Heart left ventricle (tissue), 16 donors: ENCODE measurements at regions of chr10 and their contacts with region 1.

Region 1: GRCh38 chr10:48656241-48656913 is 28.3 kb upstream of the WDFY4 start:
- DNase-seq: peak; percentile 91 to 97 (median 93)
- ATAC-seq: peak; percentile 61 to 93 (median 89)
- H3K4me3 ChIP-seq: peak overlapping the region; percentile 9 to 74 (median 62)
- H3K27ac ChIP-seq: peak overlapping the region in 7 of 12 donors; percentile 11 to 87 (median 73)
- H3K4me1 ChIP-seq: peaks cover 0 to 32% (median 12%) of the 10 kb centered on the region in 12 donors
- H3K27me3 ChIP-seq: no peaks in the 10 kb centered on the region
- CTCF ChIP-seq: peak; percentile 89 to 99 (median 98)
- POLR2A ChIP-seq: peak in 1 of 2 donors; percentile 8

Region 2: DNA sequence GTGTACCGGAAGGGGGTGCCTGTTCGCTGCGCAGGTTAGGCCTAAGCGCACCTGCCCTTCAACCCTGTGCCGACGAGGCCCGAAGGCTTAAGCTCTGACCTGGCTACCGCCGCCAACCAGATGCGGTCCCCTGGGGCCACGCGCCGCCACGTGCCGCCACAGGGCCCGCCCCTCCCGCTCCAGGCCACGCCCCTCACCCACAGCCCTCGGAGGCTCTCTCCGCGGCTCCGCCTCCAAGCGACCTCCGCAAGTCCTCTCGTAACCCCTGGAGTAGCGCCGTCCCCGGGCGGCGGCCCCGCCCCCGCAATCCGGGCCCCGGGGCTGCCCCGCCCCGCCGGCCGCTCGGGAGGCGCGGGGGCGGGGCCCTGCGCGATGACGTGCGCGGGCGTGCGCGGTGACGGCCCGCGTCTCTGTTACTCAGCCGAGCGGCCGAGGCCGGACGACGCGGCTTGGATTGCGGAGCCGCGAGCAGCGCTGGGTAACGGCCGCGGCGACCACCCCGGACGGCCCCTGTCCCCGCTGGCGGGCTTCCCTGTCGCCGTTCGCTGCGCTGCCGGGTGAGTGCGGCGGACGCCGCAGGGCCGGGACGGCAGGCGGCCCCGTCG is 350.0 kb before region 1 on chr10 and contains the start of gene MAPK8:
- intact Hi-C with region 1: loop called in 1 of 10 experiments (anchors 5 kb)
- DNase-seq: peak; percentile 93 to 97 (median 95)
- ATAC-seq: peak; percentile 93 to 97 (median 96)
- H3K4me3 ChIP-seq: peak within 1 kb of the TSS; percentile 74 to 97 (median 88)
- H3K27ac ChIP-seq: peak within 1 kb of the TSS; percentile 85 to 99 (median 97)
- H3K4me1 ChIP-seq: peaks cover 0 to 37% (median 21%) of the 10 kb centered on the region in 12 donors
- H3K27me3 ChIP-seq: no peaks in the 10 kb centered on the region
- CTCF ChIP-seq: no peak
- POLR2A ChIP-seq: peak; percentile 97 to 98
- total RNA-seq, gene MAPK8: 22.8 to 36.8 (median 31.8) TPM

Region 3: DNA sequence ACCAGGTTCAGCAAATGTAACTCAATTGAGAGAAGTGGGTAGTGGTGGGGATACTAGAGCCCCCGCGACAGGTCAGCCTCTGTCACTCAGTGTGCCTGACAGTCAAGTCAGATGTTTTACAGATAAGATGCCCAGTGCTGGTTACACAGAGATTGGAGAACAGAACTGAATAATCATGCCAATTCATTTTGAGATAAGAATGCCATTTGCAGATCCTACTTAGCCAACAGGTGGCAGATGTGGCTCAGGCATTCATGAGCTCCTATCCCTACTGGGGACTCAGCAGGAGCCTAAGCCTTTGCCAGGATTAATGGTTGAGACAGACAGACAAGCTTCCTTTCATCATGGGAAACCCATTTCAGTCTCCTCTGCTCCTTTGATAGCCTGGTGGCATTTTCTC is 212.1 kb before region 1 on chr10:
- intact Hi-C with region 1: loop called in 3 of 10 experiments (anchors 10 kb)
- DNase-seq: peak in 1 of 5 donors; percentile 32
- ATAC-seq: peak in 1 of 4 donors; percentile 31
- H3K4me3 ChIP-seq: no peak overlapping the region
- H3K27ac ChIP-seq: no peak overlapping the region
- H3K4me1 ChIP-seq: no peaks in the 10 kb centered on the region
- H3K27me3 ChIP-seq: no peaks in the 10 kb centered on the region
- CTCF ChIP-seq: peak in 9 of 12 donors; percentile 7 to 39 (median 15)
- POLR2A ChIP-seq: no peak

Region 4: GRCh38 chr10:48608279-48608681 is 48.1 kb before region 1 on chr10:
- intact Hi-C with region 1: loop called in 8 of 10 experiments (anchors 1 to 5 kb)
- DNase-seq: no peak
- ATAC-seq: peak in 3 of 4 donors; percentile 34 to 46 (median 44)
- H3K4me3 ChIP-seq: no peak overlapping the region
- H3K27ac ChIP-seq: peak overlapping the region in 1 of 12 donors; percentile 85
- H3K4me1 ChIP-seq: peaks cover 0 to 69% (median 11%) of the 10 kb centered on the region in 12 donors
- H3K27me3 ChIP-seq: peaks cover 0 to 13% (median 0%) of the 10 kb centered on the region in 9 donors
- CTCF ChIP-seq: peak; percentile 37 to 71 (median 55)
- POLR2A ChIP-seq: no peak

Region 5: DNA sequence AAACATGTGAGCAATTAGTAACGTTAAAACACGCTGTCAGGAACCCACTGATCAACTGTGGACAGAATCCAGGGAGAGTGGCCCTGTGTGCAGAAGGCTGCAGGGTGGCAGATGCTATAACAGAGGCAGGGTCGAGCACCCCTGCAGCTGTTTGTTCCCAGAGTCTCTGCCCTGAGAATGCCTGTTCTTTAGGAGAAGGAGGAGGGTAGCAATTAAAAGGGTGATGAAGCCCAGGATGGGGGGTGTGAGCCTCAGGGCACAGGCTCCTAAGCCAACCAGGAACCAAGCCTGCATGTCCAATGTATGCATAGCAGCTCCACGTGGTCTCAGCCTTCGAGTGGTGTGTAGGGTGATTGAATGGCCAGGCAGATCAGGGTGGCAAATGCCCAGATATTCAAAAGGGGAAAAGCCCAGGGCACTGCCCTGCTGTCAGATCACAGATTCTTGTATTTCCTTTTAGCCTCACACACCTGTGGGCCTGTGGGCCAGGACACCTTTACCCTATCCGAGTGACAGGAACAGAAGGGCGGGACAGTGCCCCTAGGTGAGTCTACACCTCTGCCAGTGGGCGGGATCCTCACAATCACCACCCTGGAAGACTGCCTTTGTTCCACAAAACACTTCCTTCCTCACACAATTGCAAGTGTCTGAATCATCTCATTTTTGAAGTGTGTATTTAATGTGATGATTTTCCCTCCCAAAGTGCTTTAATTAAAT is 35.6 kb after region 1 on chr10:
- intact Hi-C with region 1: no loop called
- DNase-seq: no peak
- ATAC-seq: no peak
- H3K4me3 ChIP-seq: no peak overlapping the region
- H3K27ac ChIP-seq: no peak overlapping the region
- H3K4me1 ChIP-seq: peaks cover 0 to 1% (median 0%) of the 10 kb centered on the region in 12 donors
- H3K27me3 ChIP-seq: no peaks in the 10 kb centered on the region
- CTCF ChIP-seq: no peak
- POLR2A ChIP-seq: no peak

Region 6: DNA sequence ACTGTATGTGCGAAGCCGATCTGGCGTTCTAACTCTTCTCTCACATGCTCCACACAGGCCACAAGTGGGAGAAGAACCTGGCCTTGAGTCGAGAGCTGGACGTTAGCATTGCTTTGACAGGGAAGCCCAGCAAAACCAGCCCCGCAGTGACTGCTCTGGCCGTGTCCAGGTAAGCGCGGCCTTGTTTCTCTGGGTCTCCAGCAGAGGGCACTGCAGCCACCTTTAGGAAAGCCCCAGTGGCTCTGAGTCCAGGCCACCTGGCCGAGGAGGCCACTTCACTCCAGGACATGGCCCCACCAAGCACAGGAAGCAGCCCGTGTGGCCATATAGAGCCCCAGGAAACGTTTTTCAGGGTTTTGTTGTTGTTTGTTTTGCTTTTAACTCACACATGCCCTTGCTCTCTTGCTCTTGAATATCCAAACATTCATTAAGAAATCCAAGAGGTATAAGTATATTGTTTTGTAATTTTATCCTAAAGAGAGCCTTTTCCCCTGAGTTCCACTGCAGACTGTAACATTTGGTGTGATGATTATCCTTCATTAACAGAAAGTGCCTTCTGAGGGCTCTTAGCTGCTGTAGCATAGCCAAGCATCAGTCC is 325.0 kb after region 1 on chr10:
- intact Hi-C with region 1: loop called in 9 of 10 experiments (anchors 2 to 10 kb)
- DNase-seq: peak in 4 of 5 donors; percentile 60 to 68 (median 61)
- ATAC-seq: peak; percentile 69 to 93 (median 86)
- H3K4me3 ChIP-seq: no peak overlapping the region
- H3K27ac ChIP-seq: no peak overlapping the region
- H3K4me1 ChIP-seq: peaks cover 0 to 6% (median 4%) of the 10 kb centered on the region in 12 donors
- H3K27me3 ChIP-seq: no peaks in the 10 kb centered on the region
- CTCF ChIP-seq: peak; percentile 79 to 93 (median 88)
- POLR2A ChIP-seq: no peak

Region 7: DNA sequence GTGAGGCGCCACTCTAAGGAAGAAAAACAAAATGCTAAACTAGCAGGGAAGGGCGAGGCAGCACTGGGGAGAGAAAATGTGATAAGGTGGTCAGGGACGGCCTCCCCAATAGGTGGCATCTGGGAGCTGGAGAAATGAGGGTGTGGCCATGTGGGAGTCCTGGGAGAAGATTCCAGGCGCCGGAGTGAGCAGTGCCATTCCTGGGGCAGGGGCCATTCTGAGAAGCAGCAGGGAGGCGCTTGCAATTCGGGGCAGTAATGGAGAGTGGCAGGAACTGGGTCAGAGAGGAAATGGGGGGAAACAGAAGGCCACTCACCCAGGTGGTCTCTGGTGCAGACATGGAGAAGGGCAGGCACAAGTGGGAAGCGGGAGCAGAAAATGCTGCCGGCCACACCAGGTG is 345.0 kb after region 1 on chr10:
- intact Hi-C with region 1: no loop called
- DNase-seq: peak in 1 of 5 donors; percentile 45
- ATAC-seq: peak; percentile 52 to 84 (median 72)
- H3K4me3 ChIP-seq: no peak overlapping the region
- H3K27ac ChIP-seq: peak overlapping the region in 9 of 12 donors; percentile 19 to 78 (median 64)
- H3K4me1 ChIP-seq: peaks cover 0 to 19% (median 11%) of the 10 kb centered on the region in 12 donors
- H3K27me3 ChIP-seq: no peaks in the 10 kb centered on the region
- CTCF ChIP-seq: peak in 6 of 12 donors; percentile 11 to 46 (median 25)
- POLR2A ChIP-seq: no peak

Region 8: GRCh38 chr10:49164559-49165188 is 508.3 kb after region 1 on chr10:
- intact Hi-C with region 1: loop called (anchors 2 to 5 kb)
- DNase-seq: peak in 1 of 5 donors; percentile 49
- ATAC-seq: peak; percentile 56 to 86 (median 78)
- H3K4me3 ChIP-seq: no peak overlapping the region
- H3K27ac ChIP-seq: no peak overlapping the region
- H3K4me1 ChIP-seq: peaks cover 0 to 25% (median 7%) of the 10 kb centered on the region in 12 donors
- H3K27me3 ChIP-seq: no peaks in the 10 kb centered on the region
- CTCF ChIP-seq: peak; percentile 50 to 74 (median 62)
- POLR2A ChIP-seq: no peak

Region 9: GRCh38 chr10:49272251-49273081 is 616.1 kb after region 1 on chr10:
- intact Hi-C with region 1: no loop called
- DNase-seq: peak; percentile 79 to 87 (median 81)
- ATAC-seq: peak; percentile 72 to 89 (median 79)
- H3K4me3 ChIP-seq: no peak overlapping the region
- H3K27ac ChIP-seq: peak overlapping the region; percentile 50 to 89 (median 80)
- H3K4me1 ChIP-seq: peaks cover 0 to 38% (median 29%) of the 10 kb centered on the region in 12 donors
- H3K27me3 ChIP-seq: no peaks in the 10 kb centered on the region
- CTCF ChIP-seq: no peak
- POLR2A ChIP-seq: no peak

Region 10: GRCh38 chr10:49512121-49512809 is 855.9 kb after region 1 on chr10:
- intact Hi-C with region 1: loop called in 9 of 10 experiments (anchors 2 to 10 kb)
- DNase-seq: no peak
- ATAC-seq: peak in 3 of 4 donors; percentile 34 to 51 (median 50)
- H3K4me3 ChIP-seq: no peak overlapping the region
- H3K27ac ChIP-seq: no peak overlapping the region
- H3K4me1 ChIP-seq: peaks cover 0 to 17% (median 5%) of the 10 kb centered on the region in 12 donors
- H3K27me3 ChIP-seq: no peaks in the 10 kb centered on the region
- CTCF ChIP-seq: peak; percentile 44 to 71 (median 64)
- POLR2A ChIP-seq: no peak